Heart right ventricle (tissue), 16 donors: ENCODE measurements at regions of chr16 and their contacts with region 1.

Region 1: DNA sequence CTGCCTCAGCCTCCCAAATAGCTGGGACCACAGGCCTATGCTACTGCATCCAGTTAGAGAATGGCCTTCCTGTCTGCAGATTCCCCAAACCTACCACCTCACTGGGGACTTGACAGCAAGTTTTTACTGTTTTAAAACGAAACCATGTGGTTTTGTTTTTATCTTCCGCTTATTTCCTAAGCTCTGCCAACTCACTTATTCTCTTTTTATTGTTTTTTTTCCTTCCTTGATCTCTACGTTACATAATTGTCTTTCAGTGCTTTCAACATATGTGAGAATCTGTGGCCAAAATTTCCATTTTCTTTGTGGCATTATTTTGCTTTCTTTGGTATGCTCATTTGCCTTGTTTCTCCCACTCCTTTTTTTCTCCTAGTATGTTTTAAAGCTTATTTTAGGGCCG is 14.6 kb upstream of the SLC38A7 start:
- DNase-seq: no peak
- ATAC-seq: no peak
- H3K4me3 ChIP-seq: no peak overlapping the region
- H3K27ac ChIP-seq: peak overlapping the region in 2 of 10 donors; percentile 35 to 38
- H3K4me1 ChIP-seq: peaks cover 0 to 16% (median 5%) of the 10 kb centered on the region in 9 donors
- H3K27me3 ChIP-seq: no peaks in the 10 kb centered on the region
- CTCF ChIP-seq: no peak

Region 2: DNA sequence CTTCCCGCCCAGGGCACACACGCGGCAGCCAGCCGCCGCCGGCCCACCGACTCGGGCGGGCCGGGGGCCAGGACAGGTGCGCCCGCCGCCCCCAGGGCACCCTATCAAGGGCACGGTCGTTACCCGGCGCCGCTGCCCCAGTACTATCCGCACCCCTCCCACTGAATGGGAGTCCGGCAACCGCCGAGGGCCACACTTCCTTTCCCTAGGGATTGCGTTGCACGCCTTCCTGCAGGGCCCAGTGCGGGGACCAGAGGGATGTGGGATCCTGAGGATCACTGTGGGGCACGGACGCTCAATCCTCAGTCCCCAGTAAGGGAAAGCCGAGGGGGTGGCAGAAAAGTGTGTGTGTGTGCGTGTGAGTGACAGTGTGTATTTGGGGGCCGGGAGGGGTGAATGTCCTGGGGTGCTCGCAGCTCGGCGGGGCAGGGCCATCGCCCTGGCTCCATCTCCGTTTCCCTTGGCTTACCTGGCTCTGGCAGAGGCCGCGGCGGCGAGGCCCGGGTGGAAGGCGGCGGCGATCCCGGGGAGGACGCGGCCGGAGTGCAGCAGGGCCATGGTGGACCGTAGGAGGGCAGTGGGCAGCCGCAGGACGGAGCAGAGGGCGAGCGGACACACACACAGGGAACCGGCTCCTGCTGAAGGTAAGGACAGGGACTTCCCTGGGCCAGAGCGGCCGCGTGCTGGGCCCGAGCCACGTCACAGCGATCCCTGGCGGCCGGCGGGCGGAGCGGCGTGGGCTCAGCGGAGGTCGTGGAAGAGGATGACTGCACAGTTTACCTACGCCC is 34.7 kb after region 1 on chr16 and contains the start of gene GOT2:
- intact Hi-C with region 1: loop called in 1 of 10 experiments (anchors 5 kb)
- DNase-seq: peak; percentile 77 to 85
- ATAC-seq: peak; percentile 94 to 98 (median 97)
- H3K4me3 ChIP-seq: peak within 1 kb of the TSS; percentile 74 to 99 (median 92)
- H3K27ac ChIP-seq: peak within 1 kb of the TSS; percentile 74 to 94 (median 89)
- H3K4me1 ChIP-seq: peaks cover 0 to 55% (median 33%) of the 10 kb centered on the region in 9 donors
- H3K27me3 ChIP-seq: no peaks in the 10 kb centered on the region
- CTCF ChIP-seq: peak; percentile 75 to 98 (median 91)
- total RNA-seq, gene GOT2: 379 to 658 (median 556) TPM